Motor neuron (in vitro differentiated cells): ENCODE measurements at regions of chr9 and their contacts with region 1.

Region 1: DNA sequence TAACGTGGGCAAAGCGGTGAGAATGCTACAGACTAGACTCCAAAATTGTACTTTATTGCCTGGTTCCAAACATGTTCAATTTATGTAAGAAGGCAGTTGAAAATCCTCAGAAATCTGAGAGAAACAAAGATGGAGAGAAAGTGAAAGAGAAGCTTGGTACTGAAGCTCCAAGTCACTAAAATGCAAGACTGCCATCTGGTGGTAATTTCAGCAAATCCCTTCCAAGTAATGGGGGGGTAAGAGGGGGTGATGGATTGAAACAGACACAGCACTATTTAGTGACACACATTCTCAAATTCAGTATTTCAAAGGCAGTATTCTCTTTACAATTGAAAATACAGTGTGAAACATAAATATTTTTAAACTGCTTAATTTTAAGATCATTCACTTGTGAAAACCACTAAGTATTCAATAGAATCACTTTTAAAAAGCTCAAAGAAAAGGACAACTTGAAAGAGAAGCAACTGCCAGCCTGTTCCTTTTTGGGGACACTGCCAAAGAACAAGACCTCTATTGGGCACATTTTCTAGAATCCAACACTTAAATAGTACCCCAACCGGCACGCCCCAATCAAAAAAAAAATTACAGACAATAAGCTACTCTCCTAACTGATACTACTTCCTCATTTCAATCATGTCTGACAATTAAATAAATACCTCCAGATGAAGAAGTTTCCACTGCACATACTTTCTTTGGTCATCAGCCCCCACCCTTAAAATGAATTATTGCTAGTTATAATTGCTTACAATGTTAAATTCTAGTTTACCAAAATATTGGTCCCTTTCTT is 131.5 kb downstream of the AGTPBP1 start:
- ATAC-seq: peak; percentile 54 to 98 (median 79)
- H3K4me3 ChIP-seq: no peak overlapping the region
- H3K27ac ChIP-seq: no peak overlapping the region
- H3K4me1 ChIP-seq: peaks cover 0 to 2% of the 10 kb centered on the region in 2 donors

Region 2: GRCh38 chr9:84397151-84397728 is 1213.0 kb before region 1 on chr9:
- in situ Hi-C with region 1: loop called in 4 of 9 experiments (anchors 25 kb)
- ATAC-seq: peak; percentile 79 to 98 (median 96)
- H3K4me3 ChIP-seq: no peak overlapping the region
- H3K27ac ChIP-seq: no peak overlapping the region
- H3K4me1 ChIP-seq: peaks cover 2 to 4% of the 10 kb centered on the region in 2 donors

Region 3: DNA sequence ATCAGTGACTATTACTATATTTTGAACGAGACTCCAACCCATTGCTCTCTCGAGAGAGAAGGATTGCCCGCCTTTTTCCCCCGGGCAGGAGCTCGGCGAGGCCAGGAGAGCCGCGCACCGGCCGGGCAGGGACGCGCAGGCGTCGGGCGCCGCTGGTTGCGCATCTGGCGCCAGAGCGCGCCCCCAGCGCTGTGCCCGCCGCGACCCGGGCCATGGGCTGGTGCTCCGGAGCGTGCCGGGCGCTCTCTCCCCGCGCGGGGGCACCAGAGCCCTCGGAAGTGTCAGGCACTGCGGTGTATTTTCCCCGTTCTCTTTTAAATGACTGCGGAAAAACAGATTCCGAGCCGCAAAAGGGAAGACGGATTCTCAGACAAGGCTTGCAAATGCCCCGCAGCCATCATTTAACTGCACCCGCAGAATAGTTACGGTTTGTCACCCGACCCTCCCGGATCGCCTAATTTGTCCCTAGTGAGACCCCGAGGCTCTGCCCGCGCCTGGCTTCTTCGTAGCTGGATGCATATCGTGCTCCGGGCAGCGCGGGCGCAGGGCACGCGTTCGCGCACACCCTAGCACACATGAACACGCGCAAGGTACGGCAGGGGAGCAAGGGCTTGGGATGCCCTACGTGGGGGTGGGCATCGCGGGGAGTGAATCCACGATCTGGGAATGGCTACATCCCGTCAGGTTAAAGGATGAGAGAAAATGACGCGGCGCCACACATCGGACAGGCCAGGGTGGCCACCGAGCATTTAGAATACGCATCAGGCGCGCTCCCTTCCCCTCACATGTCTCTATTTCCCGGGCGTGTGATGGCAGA is 941.9 kb before region 1 on chr9:
- in situ Hi-C with region 1: loop called in 1 of 9 experiments (anchors 25 kb)
- ATAC-seq: peak; percentile 63 to 93 (median 85)
- H3K4me3 ChIP-seq: peak overlapping the region; percentile 48 to 78 (median 69)
- H3K27ac ChIP-seq: peak overlapping the region; percentile 45
- H3K4me1 ChIP-seq: no peaks in the 10 kb centered on the region

Region 4: DNA sequence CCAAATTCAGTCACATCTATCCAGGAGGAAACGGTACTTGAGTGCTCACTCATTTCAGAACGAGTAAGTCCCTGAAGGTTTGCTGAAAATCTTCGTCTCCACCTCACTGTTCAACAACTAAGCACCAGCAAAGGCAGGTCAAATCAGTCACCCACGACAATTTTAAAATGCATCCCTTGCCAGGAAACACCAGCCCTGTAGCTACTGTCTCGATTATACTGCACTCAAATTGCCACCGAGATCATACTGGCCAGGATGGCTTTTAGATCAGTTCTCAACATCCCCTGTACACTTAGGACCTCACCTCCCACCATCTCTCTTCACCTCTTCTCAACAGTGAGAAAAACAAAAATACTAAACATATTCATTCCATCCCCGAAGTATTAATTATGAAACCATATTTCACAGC is 167.1 kb before region 1 on chr9:
- in situ Hi-C with region 1: no loop called
- ATAC-seq: no peak
- H3K4me3 ChIP-seq: no peak overlapping the region
- H3K27ac ChIP-seq: no peak overlapping the region
- H3K4me1 ChIP-seq: no peaks in the 10 kb centered on the region

Region 5: DNA sequence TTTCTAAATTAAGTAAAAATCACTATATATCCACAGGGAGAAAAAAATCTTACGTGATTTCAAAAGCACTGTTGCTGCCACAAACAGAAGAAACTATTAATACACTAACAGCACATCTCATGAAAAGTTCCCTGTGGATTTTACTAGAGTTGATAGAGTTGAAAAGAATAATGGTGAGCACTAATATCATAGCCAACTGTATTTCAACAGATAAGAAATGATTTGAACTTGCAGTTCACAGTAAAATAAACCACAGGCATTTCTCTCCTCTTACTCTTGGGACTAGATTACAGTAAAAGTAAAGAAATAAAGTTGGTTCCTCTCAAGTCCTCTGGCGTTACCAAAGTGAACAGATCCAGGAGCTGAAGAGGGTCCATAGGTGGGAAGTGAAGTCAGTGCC is 103.6 kb after region 1 on chr9:
- in situ Hi-C with region 1: no loop called
- ATAC-seq: no peak
- H3K4me3 ChIP-seq: no peak overlapping the region
- H3K27ac ChIP-seq: no peak overlapping the region
- H3K4me1 ChIP-seq: no peaks in the 10 kb centered on the region